CD4-positive, alpha-beta memory T cell (primary cell): ENCODE measurements at regions of chr4 and their contacts with region 1.

Region 1: DNA sequence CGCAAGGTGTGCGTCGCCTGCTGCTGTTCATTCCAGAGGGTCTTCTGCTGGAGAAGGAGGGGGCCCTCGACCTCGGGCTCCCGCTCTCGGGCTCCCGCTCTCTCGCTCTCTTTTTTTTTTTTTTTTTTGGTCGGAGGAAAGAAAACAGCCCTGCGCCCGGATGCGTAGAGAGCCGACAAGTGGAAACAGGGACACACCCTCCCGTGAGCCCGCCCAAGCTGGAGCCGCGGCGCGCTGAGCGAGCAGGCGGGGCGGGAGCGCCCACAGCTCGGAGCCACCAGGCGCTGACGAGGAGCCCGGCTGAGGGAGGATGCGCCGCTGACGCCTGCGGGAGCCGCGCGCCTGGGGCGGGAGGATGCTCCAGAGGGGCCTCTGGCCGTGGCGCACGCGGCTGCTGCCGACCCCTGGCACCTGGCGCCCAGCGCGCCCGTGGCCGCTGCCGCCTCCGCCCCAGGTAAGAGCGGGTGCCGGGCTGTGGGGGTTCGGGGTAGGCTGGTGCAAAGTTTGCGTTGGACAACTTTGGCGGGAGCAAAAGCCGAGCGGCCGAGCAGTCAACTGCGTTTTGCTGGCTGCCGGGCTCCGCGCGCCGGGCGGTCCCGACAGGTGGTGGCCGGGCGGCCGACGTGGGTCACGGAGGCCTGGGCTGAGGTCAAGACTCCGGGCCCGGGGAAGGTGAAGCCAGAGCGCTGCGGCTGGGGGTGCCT is at the start of gene MCUB:
- DNase-seq: peak; percentile 93 to 95 (median 94)
- H3K4me3 ChIP-seq: peak within 1 kb of the TSS; percentile 92 to 98
- H3K4me3 Mint-ChIP-seq: peak within 1 kb of the TSS; percentile 95 to 99 (median 98)
- H3K27ac ChIP-seq: peak within 1 kb of the TSS; percentile 96
- H3K27ac Mint-ChIP-seq: peak within 1 kb of the TSS; percentile 91 to 99 (median 98)
- H3K4me1 ChIP-seq: peaks cover 54% of the 10 kb centered on the region
- H3K4me1 Mint-ChIP-seq: peaks cover 38 to 66% (median 54%) of the 10 kb centered on the region in 4 donors
- H3K27me3 ChIP-seq: no peaks in the 10 kb centered on the region
- H3K27me3 Mint-ChIP-seq: no peaks in the 10 kb centered on the region
- total RNA-seq, gene MCUB: 142 to 146 TPM

Region 2: DNA sequence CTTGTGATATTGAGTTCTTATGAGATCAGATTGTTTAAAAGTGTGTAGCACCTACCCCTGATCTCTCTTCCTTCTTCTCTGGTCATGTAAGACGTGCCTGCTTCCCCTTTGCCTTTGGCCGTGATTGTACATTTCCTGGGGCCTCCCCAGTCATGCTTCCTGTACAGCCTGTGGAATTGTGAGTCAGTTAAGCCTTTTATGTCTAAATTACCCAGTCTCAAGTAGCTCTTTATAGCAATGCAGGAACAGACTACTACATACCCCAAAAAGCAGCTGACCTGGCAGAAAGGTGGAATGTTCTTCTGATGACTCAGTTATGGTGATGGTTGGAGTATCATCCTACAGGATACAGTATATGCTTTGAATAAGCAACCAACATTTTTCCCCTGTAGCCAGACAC is 11.5 kb before region 1 on chr4:
- CTCF ChIA-PET with region 1: interaction called, 4 read pairs
- POLR2A ChIA-PET with region 1: interaction called, 13 read pairs
- intact Hi-C with region 1: no loop called
- DNase-seq: no peak
- H3K4me3 ChIP-seq: no peak overlapping the region
- H3K4me3 Mint-ChIP-seq: peak overlapping the region in 2 of 8 donors; percentile 9 to 30
- H3K27ac ChIP-seq: no peak overlapping the region
- H3K27ac Mint-ChIP-seq: peak overlapping the region in 6 of 7 donors; percentile 0 to 80 (median 7)
- H3K4me1 ChIP-seq: peaks cover 9% of the 10 kb centered on the region
- H3K4me1 Mint-ChIP-seq: peaks cover 16 to 24% (median 24%) of the 10 kb centered on the region in 4 donors
- H3K27me3 ChIP-seq: no peaks in the 10 kb centered on the region
- H3K27me3 Mint-ChIP-seq: no peaks in the 10 kb centered on the region

Region 3: GRCh38 chr4:109574102-109574850 is 14.1 kb after region 1 on chr4:
- CTCF ChIA-PET with region 1: interaction called, 7 read pairs
- POLR2A ChIA-PET with region 1: interaction called, 48 read pairs
- intact Hi-C with region 1: loop called (anchors 1 kb)
- DNase-seq: peak in 4 of 5 donors; percentile 31 to 45 (median 40)
- H3K4me3 ChIP-seq: no peak overlapping the region
- H3K4me3 Mint-ChIP-seq: peak overlapping the region; percentile 4 to 79 (median 50)
- H3K27ac ChIP-seq: no peak overlapping the region
- H3K27ac Mint-ChIP-seq: peak overlapping the region; percentile 10 to 88 (median 59)
- H3K4me1 ChIP-seq: peaks cover 63% of the 10 kb centered on the region
- H3K4me1 Mint-ChIP-seq: peaks cover 52 to 80% (median 67%) of the 10 kb centered on the region in 4 donors
- H3K27me3 ChIP-seq: no peaks in the 10 kb centered on the region
- H3K27me3 Mint-ChIP-seq: no peaks in the 10 kb centered on the region

Region 4: DNA sequence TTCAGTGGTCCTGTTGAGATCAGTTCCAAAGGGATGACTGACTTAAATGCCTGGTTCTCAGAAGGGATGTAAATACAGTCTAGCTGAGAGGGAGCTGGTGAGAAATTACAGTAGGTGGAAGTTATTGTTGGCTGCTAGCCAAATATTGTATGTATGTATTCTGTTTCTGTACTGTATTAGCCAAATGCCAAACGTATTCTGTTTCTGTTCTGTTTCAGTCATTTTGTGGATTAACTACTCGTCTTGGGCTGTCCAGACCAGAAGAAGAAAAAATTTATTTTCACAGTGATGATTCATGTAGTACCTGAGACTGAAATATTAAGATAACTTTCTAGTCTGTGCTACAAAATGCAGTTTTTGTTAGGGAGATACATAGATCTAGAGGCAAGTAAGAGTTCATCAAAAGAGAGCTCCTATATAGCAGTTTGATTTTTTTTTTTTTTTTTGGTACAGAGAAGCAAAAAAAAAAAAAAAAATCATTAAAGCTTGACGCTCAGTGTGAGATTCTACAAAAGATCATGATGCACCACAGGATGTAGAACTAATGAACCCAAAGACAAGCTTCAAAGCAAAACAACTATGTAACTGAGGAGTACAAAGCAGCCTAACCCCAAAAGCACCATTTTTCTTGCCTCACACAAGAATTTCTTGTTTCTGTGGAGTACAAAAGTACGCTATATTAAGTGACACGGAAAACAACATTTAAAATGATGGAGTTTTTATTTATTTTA is 88.3 kb after region 1 on chr4:
- CTCF ChIA-PET with region 1: interaction called, 5 read pairs
- POLR2A ChIA-PET with region 1: interaction called, 122 read pairs
- intact Hi-C with region 1: loop called (anchors 1 kb)
- DNase-seq: peak; percentile 70 to 84 (median 81)
- H3K4me3 ChIP-seq: peak overlapping the region; percentile 12 to 25
- H3K4me3 Mint-ChIP-seq: peak overlapping the region; percentile 59 to 86 (median 77)
- H3K27ac ChIP-seq: peak overlapping the region; percentile 61
- H3K27ac Mint-ChIP-seq: peak overlapping the region in 6 of 7 donors; percentile 90 to 98 (median 94)
- H3K4me1 ChIP-seq: peaks cover 82% of the 10 kb centered on the region
- H3K4me1 Mint-ChIP-seq: peaks cover 12 to 48% (median 41%) of the 10 kb centered on the region in 4 donors
- H3K27me3 ChIP-seq: no peaks in the 10 kb centered on the region
- H3K27me3 Mint-ChIP-seq: no peaks in the 10 kb centered on the region

Region 5: DNA sequence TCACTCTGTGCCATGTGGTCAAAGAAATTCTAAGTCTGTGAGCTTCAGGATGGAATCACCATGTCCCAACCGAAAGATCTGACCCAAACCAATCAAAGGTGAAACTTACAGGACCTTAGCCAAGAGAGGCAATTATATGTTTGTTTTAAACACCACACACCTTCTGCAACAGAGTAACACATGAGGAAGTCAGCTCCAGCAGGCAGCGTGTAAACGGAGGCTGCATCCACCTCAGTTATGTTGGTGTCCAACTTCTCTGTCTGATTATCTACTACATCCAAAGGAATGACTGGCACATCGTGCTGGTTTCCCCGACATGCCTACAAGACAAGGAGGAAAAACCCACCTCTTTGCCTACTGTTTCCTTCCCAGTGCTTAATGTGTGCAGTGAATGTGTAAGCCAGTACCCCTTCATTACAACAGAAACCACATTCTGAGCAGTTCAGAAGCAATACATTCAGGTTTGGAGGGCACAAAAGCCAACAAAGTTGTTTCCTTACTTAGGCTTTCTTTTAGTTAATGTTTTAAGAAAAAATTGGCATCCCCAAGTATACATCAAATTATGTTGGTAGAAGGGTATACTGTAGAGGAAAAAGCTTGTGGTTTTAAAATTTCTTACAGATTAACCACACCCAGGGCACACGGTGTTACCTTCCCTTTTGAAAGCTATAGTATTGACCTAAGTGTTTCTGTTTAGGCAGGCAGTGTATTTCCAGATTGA is 130.7 kb after region 1 on chr4:
- CTCF ChIA-PET with region 1: no interaction called
- POLR2A ChIA-PET with region 1: interaction called, 21 read pairs
- intact Hi-C with region 1: no loop called
- DNase-seq: peak in 4 of 5 donors; percentile 36 to 54 (median 46)
- H3K4me3 ChIP-seq: no peak overlapping the region
- H3K4me3 Mint-ChIP-seq: peak overlapping the region; percentile 43 to 83 (median 74)
- H3K27ac ChIP-seq: peak overlapping the region; percentile 7
- H3K27ac Mint-ChIP-seq: peak overlapping the region; percentile 79 to 93 (median 86)
- H3K4me1 ChIP-seq: peaks cover 24% of the 10 kb centered on the region
- H3K4me1 Mint-ChIP-seq: peaks cover 26 to 46% (median 36%) of the 10 kb centered on the region in 4 donors
- H3K27me3 ChIP-seq: no peaks in the 10 kb centered on the region
- H3K27me3 Mint-ChIP-seq: no peaks in the 10 kb centered on the region

Region 6: GRCh38 chr4:109729718-109730618 is 169.8 kb after region 1 on chr4 and contains the start of gene PLA2G12A:
- CTCF ChIA-PET with region 1: interaction called, 3 read pairs
- POLR2A ChIA-PET with region 1: interaction called, 19 read pairs
- intact Hi-C with region 1: no loop called
- DNase-seq: peak; percentile 78 to 90 (median 87)
- H3K4me3 ChIP-seq: peak within 1 kb of the TSS; percentile 58 to 94
- H3K4me3 Mint-ChIP-seq: peak within 1 kb of the TSS; percentile 89 to 93 (median 91)
- H3K27ac ChIP-seq: peak within 1 kb of the TSS; percentile 72
- H3K27ac Mint-ChIP-seq: peak within 1 kb of the TSS; percentile 73 to 94 (median 90)
- H3K4me1 ChIP-seq: peaks cover 18% of the 10 kb centered on the region
- H3K4me1 Mint-ChIP-seq: peaks cover 18 to 32% (median 21%) of the 10 kb centered on the region in 4 donors
- H3K27me3 ChIP-seq: no peaks in the 10 kb centered on the region
- H3K27me3 Mint-ChIP-seq: peaks cover 0 to 1% of the 10 kb centered on the region in 2 donors
- total RNA-seq, gene PLA2G12A: 15.7 to 18.1 TPM

Region 7: DNA sequence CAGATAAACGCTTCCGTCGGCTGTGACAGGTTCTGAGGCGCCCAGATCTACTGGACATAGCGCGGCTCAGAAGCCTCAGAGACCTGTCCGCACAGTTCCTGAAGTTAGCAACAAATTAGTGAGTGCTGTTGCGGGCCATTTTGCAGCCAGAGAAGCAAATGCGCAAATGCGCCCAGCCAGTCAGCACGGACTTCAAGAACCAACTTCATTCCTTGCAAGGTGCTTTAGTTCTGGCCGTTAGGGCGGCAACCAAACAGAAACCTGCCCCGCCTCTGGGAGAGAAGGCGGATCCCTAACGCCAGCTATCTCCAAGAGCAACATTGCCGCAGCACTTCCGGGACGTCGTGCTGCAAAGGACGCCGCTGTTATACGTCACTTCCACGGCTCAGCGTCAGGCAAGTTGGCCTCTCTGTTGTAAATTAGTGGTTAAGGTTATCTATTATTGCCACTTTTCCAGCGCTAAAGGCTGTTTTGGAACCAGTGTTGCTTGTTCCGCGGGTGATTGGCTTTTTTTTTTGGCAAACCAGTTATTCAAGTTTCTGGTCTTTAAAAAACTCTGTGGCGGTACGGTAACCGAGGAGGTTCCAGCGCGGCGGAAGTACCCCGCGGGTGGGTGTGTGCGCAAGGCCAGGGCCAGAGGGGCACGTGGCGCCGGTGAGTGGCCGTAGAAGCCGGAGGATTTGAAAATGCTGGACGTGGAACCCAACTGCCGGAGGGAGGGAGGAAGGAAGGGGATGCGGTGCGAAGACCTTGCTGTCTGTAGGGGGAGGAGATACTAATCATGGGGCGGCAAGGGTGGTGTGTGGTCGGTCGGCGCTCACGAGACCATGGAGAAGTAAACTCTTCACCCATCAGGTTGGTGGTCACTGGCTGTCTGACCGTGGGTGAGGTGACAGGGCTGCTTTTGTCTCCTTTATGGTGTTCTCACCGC is 255.3 kb after region 1 on chr4 and contains the start of gene GAR1:
- CTCF ChIA-PET with region 1: interaction called, 3 read pairs
- POLR2A ChIA-PET with region 1: interaction called, 12 read pairs
- intact Hi-C with region 1: loop called (anchors 1 kb)
- DNase-seq: peak; percentile 85 to 93 (median 87)
- H3K4me3 ChIP-seq: peak within 1 kb of the TSS; percentile 98 to 100
- H3K4me3 Mint-ChIP-seq: peak within 1 kb of the TSS; percentile 97 to 99 (median 98)
- H3K27ac ChIP-seq: peak within 1 kb of the TSS; percentile 93
- H3K27ac Mint-ChIP-seq: peak within 1 kb of the TSS; percentile 97 to 99 (median 99)
- H3K4me1 ChIP-seq: peaks cover 22% of the 10 kb centered on the region
- H3K4me1 Mint-ChIP-seq: peaks cover 27 to 44% (median 36%) of the 10 kb centered on the region in 4 donors
- H3K27me3 ChIP-seq: no peaks in the 10 kb centered on the region
- H3K27me3 Mint-ChIP-seq: no peaks in the 10 kb centered on the region
- total RNA-seq, gene GAR1: 13.7 to 14.1 TPM